ENCODE measurements at regions of chr11 and their contacts with region 1.

Region 1: DNA sequence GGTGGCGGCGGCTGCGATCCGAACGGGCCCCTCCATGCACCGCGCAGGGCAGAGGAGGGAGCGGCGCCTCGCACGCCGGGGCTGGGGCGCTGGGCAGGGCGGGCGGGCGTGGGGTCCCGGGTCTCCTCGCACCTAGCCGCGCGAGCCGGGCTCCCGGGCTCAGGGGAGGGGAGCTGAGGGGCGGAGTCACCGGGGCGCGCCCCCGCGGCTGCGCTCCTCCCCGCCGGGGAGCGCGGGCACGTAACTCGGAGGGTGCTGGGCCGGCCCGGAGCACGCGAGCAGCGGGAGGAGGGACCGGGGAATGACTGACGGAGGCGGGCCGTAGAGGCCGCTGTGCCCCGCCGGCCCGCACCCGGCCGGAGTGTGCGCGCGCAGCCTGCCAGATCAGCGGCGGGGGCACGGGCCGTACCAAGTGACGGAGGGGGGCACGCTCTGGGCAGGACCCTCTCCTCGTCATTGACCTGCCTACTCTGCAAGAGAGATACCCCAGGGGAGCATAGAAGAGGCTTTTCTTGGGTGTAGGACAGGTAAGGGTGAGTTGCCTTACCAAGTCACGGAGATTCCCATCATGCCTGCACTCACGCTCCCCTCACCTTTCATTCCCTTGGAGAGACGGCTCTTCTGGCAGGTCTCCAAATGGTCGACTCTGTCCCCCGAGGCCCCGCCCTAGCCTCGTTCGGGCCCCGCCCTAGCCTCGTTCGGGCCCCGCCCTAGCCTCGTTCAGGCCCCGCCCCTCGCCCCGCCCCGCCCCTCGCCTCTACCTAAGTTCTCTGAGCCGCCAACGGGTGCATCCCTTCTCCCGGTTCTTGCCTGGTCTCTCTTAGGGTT is at the start of gene CDON:
- DNase-seq: peak; percentile 78 to 95 (median 89)
- ATAC-seq: peak; percentile 89
- H3K4me3 ChIP-seq: peak within 1 kb of the TSS; percentile 60 to 91
- H3K4me3 Mint-ChIP-seq: peak within 1 kb of the TSS; percentile 91
- H3K27ac ChIP-seq: peak within 1 kb of the TSS; percentile 80 to 90
- H3K27ac Mint-ChIP-seq: peak within 1 kb of the TSS; percentile 95
- H3K4me1 ChIP-seq: peaks cover 13% of the 10 kb centered on the region
- H3K4me1 Mint-ChIP-seq: peaks cover 13% of the 10 kb centered on the region
- H3K27me3 ChIP-seq: no peaks in the 10 kb centered on the region
- H3K27me3 Mint-ChIP-seq: peaks cover 4% of the 10 kb centered on the region
- CTCF ChIP-seq: no peak
- total RNA-seq, gene CDON: 1.00 to 1.1 TPM

Region 2: GRCh38 chr11:125887373-125888324 is 175.2 kb before region 1 on chr11 and contains the start of gene HYLS1:
- CTCF ChIA-PET with region 1: no interaction called
- POLR2A ChIA-PET with region 1: no interaction called
- intact Hi-C with region 1: loop called in 1 of 2 experiments (anchors 2 kb)
- DNase-seq: peak; percentile 87 to 97 (median 94)
- ATAC-seq: peak; percentile 88
- H3K4me3 ChIP-seq: peak within 1 kb of the TSS; percentile 81 to 84
- H3K4me3 Mint-ChIP-seq: peak within 1 kb of the TSS; percentile 88
- H3K27ac ChIP-seq: peak within 1 kb of the TSS; percentile 61 to 87
- H3K27ac Mint-ChIP-seq: peak within 1 kb of the TSS; percentile 87
- H3K4me1 ChIP-seq: peaks cover 10% of the 10 kb centered on the region
- H3K4me1 Mint-ChIP-seq: peaks cover 31% of the 10 kb centered on the region
- H3K27me3 ChIP-seq: no peaks in the 10 kb centered on the region
- H3K27me3 Mint-ChIP-seq: no peaks in the 10 kb centered on the region
- CTCF ChIP-seq: no peak
- total RNA-seq, gene HYLS1: 1.1 to 1.2 TPM

Region 3: DNA sequence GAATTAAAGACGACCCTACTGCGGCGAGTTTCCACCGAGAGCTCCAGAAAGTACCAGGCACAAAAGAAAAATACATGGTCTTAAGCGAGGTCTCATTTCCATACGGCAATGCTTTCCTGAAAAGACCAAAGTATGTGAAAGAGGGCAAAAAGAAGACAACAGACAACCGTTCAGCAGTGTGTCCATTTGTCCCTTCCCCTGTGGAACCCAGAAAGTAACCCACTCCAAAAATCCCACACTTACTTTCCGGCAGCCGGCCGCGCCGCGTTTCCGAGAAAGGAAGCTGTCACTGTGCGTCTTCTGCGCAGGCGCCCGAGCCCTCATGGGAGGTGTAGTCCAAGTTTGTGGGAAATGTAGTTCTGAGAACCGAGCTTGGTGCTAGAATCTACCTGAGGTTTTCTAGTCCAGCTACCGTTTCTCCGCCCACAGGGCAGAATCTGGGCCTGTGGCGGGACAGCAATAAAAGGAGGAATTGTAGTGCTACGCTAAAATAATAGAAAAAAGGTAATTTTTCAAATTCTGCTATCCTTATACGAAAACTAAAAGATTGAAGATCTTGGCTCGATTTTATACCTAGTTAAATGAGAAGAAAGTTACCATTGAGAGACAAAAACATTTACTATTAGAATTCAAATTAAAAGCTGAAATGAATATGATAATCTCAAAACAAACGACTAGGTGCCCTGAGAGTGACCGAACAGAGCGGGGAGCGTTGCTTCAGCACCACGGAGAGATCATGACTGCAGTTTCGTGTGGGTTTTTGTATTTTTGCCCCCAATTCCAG is 159.8 kb before region 1 on chr11 and contains the start of gene PUS3:
- CTCF ChIA-PET with region 1: no interaction called
- POLR2A ChIA-PET with region 1: no interaction called
- intact Hi-C with region 1: loop called (anchors 2 to 5 kb)
- DNase-seq: peak; percentile 67 to 91 (median 87)
- ATAC-seq: peak; percentile 92
- H3K4me3 ChIP-seq: peak within 1 kb of the TSS; percentile 58 to 77
- H3K4me3 Mint-ChIP-seq: peak within 1 kb of the TSS; percentile 95
- H3K27ac ChIP-seq: peak within 1 kb of the TSS; percentile 48 to 67
- H3K27ac Mint-ChIP-seq: peak within 1 kb of the TSS; percentile 91
- H3K4me1 ChIP-seq: peaks cover 16% of the 10 kb centered on the region
- H3K4me1 Mint-ChIP-seq: peaks cover 41% of the 10 kb centered on the region
- H3K27me3 ChIP-seq: peaks cover 5 to 7% of the 10 kb centered on the region in 2 experiments
- H3K27me3 Mint-ChIP-seq: peaks cover 19% of the 10 kb centered on the region
- CTCF ChIP-seq: no peak
- total RNA-seq, gene PUS3: 4.5 to 5.2 TPM

Region 4: GRCh38 chr11:126083829-126084607 is 21.1 kb after region 1 on chr11:
- CTCF ChIA-PET with region 1: no interaction called
- POLR2A ChIA-PET with region 1: interaction called, 8 read pairs
- intact Hi-C with region 1: loop called in 1 of 2 experiments (anchors 1 kb)
- DNase-seq: peak in 8 of 9 experiments; percentile 13 to 62 (median 28)
- ATAC-seq: peak; percentile 94
- H3K4me3 ChIP-seq: peak overlapping the region in 1 of 2 experiments; percentile 20
- H3K4me3 Mint-ChIP-seq: peak overlapping the region; percentile 61
- H3K27ac ChIP-seq: peak overlapping the region; percentile 21 to 59
- H3K27ac Mint-ChIP-seq: peak overlapping the region; percentile 91
- H3K4me1 ChIP-seq: peaks cover 26% of the 10 kb centered on the region
- H3K4me1 Mint-ChIP-seq: peaks cover 20% of the 10 kb centered on the region
- H3K27me3 ChIP-seq: no peaks in the 10 kb centered on the region
- H3K27me3 Mint-ChIP-seq: no peaks in the 10 kb centered on the region
- CTCF ChIP-seq: no peak

Region 5: DNA sequence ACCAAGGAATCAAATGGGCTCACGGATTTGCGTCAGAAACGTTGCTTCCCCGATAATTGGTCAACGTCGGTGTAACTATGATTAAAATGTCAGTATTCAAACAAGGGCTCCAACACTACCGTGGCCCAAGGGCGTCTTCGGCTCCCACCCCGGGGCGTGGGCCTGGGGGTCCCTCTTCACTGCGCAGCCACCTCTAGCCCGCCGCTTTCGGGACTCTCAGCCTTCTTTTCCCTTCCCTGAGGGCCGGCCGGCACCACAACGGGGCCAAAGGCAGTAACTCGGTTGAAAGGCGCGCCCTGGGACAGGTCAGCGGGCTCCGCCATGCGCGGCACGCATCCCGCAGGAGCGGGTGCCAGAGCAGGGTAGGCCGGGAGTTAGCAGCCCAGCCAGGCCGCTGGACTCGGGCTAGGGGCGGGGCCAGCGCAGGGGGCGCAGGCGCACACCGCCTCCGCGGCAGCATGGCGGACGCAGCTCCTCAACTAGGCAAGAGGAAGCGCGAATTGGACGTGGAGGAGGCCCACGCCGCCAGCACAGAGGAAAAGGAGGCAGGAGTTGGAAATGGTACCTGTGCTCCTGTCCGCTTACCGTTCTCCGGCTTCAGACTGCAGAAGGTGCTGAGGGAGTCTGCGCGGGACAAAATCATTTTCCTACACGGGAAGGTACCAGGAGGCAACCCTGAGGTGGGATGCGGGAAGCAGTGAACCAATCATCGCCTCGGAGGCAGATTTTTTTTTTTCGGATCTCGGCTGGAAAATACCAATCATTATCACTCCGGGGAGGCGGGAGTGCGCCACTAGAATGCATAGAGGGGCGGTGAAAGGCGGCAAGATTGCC is 240.9 kb after region 1 on chr11 and contains the start of gene DCPS:
- CTCF ChIA-PET with region 1: no interaction called
- POLR2A ChIA-PET with region 1: no interaction called
- intact Hi-C with region 1: loop called in 1 of 2 experiments (anchors 1 kb)
- DNase-seq: peak; percentile 66 to 92 (median 84)
- ATAC-seq: peak; percentile 96
- H3K4me3 ChIP-seq: peak within 1 kb of the TSS; percentile 93 to 97
- H3K4me3 Mint-ChIP-seq: peak within 1 kb of the TSS; percentile 88
- H3K27ac ChIP-seq: peak within 1 kb of the TSS; percentile 92 to 94
- H3K27ac Mint-ChIP-seq: peak within 1 kb of the TSS; percentile 89
- H3K4me1 ChIP-seq: peaks cover 21% of the 10 kb centered on the region
- H3K4me1 Mint-ChIP-seq: peaks cover 35% of the 10 kb centered on the region
- H3K27me3 ChIP-seq: no peaks in the 10 kb centered on the region
- H3K27me3 Mint-ChIP-seq: no peaks in the 10 kb centered on the region
- CTCF ChIP-seq: no peak
- total RNA-seq, gene DCPS: 7.3 to 7.5 TPM

Measured in CD8-positive, alpha-beta T cell (primary cell).